Cardiac septum (tissue), 1 donor: ENCODE measurements at regions of chr18 and their contacts with region 1.

Region 1: DNA sequence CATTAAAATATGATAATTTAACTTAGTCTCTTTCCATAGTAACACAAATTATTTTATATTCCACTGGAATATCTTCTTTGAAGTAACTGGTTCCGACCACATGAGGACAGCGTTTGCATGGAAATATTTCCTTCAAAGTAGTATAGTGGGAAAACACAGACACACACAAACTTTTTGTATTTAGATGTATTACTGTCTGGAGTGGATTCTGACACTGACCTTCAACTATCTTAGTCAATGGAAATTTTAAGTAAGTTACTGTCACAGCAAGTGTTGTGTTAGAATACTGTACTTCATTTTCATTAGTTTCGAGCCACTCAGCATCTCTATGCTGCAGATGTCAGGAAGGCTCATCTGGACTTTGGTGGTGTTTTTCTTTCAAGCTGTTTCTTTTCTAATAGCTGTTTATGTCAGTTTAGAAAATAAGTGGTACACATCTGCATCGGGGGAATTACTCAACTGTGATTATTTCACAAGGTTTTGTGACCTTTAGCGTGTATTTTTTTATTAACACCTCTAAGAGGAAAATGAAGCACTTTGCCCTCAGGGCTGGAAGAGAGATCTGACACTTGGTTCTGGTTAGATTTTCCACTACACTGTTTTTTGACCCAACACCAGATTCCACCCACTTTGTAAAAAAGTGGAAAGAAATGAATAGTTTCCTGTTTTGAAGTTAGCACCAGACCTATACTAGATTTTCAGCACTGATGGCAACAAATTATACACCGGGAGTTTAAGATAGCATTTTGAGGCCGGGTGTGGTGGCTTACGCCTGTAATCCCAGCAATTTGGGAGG is 18.9 kb upstream of the THOC1 start:
- DNase-seq: no peak

Region 2: DNA sequence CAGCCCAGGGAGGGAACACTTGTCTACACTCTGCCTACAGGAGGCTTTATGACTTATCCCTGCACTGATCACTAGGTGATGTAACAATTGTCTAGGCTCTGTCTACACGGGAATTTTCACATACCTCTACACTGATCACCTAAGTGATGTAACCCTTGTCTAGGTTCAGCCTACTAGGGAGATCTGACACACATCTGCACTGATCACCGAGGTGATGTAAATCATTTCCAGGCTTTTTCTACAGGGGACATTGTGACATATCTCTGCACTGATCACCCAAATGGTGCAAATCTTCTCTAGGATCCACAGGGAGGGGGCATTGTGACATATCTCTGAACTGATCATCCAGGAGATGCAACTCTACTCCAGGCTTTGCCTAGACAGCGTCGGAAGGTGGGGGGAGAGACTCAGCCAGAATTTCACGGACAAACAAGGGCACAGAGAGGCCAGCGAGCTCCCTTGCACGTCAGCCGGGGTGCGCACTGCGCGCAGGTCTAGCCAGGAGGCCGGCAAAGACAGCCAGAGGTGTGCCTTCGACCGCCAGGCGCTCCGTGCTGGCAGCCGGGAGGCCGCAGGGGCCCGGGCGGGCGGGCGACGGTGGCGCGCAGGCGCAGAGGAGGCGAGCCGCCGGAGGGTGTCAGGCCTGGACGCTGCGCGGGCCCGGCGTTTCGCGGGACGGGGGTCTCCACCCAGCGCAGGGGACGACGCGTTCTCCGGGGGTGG is 175.3 kb before region 1 on chr18:
- intact Hi-C with region 1: no loop called
- DNase-seq: no peak

Region 3: GRCh38 chr18:331221-331821 is 44.6 kb after region 1 on chr18:
- intact Hi-C with region 1: no loop called
- DNase-seq: no peak

Region 4: GRCh38 chr18:564708-565561 is 278.2 kb after region 1 on chr18:
- intact Hi-C with region 1: no loop called
- DNase-seq: no peak

Region 5: GRCh38 chr18:616380-616995 is 329.8 kb after region 1 on chr18:
- intact Hi-C with region 1: loop called (anchors 2 kb)
- DNase-seq: no peak